HEK293 (cell line): ENCODE measurements at regions of chr4 and their contacts with region 1.

Region 1: GRCh38 chr4:158729716-158730559 is 6.7 kb upstream of the PPID start:
- H3K4me3 ChIP-seq: no peak overlapping the region
- H3K27ac ChIP-seq: no peak overlapping the region
- H3K4me1 ChIP-seq: no peaks in the 10 kb centered on the region
- CTCF ChIP-seq: peak; percentile 68

Region 2: GRCh38 chr4:158850800-158851644 is 121.1 kb after region 1 on chr4:
- CTCF ChIA-PET with region 1: interaction called, 18 read pairs
- POLR2A ChIA-PET with region 1: interaction called, 3 read pairs
- H3K4me3 ChIP-seq: no peak overlapping the region
- H3K27ac ChIP-seq: no peak overlapping the region
- H3K4me1 ChIP-seq: no peaks in the 10 kb centered on the region
- CTCF ChIP-seq: no peak

Region 3: DNA sequence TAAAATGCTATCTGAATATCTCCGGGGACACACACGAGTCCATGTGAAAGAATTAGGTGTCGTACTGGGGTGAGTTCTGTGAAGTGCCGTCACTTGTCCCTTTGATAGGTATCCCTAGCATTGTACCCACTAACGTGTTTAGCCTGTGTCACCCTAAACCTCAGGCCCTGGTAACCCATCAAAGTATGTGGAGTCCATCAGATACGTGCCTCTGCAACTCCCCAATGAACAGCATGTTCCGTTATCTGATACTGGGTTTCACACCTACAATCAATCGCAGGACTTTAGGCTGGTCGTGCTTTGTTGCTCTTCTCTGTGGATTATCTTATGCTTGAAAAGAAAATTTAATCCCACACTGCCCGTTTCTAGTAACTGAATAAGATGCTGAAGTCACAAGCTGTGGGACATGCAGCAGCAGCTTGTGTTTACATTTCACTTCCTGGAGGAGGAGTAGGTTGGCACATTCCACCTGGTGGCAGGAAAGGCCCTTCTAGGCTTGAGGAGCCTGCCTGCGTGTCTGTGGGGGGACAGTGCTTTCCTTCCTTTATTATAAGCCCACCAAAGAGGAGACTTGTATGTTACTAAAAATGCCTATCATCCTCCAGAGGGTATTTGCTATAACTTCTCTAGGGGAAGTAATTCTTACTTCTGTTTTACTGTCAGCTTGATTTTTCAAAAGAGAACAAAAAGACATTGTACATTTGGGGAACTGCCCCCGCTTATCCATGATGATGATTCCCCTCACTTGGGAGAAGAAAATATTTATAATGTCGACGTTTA is 166.0 kb after region 1 on chr4:
- CTCF ChIA-PET with region 1: no interaction called
- POLR2A ChIA-PET with region 1: no interaction called
- H3K4me3 ChIP-seq: no peak overlapping the region
- H3K27ac ChIP-seq: no peak overlapping the region
- H3K4me1 ChIP-seq: no peaks in the 10 kb centered on the region; the same call in 1 of the 2 replicates
- CTCF ChIP-seq: no peak